Caco-2 (cell line): ENCODE measurements at regions of chr7 and their contacts with region 1.

Region 1: GRCh38 chr7:26864309-26865093 is at the start of gene SKAP2:
- DNase-seq: peak; percentile 99
- H3K4me3 ChIP-seq: peak within 1 kb of the TSS; percentile 88
- H3K4me3 Mint-ChIP-seq: peak within 1 kb of the TSS; percentile 87
- H3K27ac Mint-ChIP-seq: peak within 1 kb of the TSS; percentile 81
- H3K4me1 ChIP-seq: peaks cover 7% of the 10 kb centered on the region
- H3K4me1 Mint-ChIP-seq: peaks cover 7% of the 10 kb centered on the region
- H3K27me3 ChIP-seq: no peaks in the 10 kb centered on the region
- H3K27me3 Mint-ChIP-seq: no peaks in the 10 kb centered on the region
- CTCF ChIP-seq: no peak
- total RNA-seq, gene SKAP2: 36.2 and 38.2 TPM in 2 replicates

Region 2: DNA sequence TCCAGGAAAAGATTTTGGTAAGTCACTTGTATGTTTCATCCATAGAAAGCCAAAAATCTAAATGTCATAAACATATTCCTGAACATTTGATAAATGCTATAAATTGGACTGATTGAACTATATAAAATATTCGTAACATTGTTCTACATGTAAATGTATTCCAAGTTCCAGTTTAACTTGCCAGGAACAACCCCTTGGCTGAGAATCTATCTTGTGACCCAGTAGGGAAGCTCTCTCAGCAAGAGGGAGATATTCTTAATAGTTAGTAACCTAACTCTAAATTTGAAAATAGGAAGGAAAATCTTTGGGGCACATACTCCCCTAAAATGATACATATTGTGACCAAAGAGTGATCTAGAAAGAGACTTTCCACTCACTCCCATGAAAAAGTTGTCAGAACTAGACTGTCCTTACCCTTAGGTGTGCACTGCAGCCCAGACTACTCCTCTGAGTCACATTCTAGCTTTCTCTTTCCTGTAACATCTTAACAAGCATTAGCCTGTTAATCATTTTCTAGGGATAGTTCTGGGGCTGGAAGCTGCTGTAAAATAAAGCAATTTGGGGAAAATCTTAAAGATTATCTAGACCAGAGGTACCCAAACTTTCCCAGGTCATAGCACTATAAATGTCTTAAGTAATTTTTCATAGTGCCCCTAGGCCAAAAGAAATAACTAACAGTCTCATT is 73.6 kb after region 1 on chr7:
- CTCF ChIA-PET with region 1: no interaction called
- POLR2A ChIA-PET with region 1: no interaction called
- intact Hi-C with region 1: no loop called
- DNase-seq: peak in 1 of 2 experiments; percentile 19
- H3K4me3 ChIP-seq: no peak overlapping the region
- H3K4me3 Mint-ChIP-seq: no peak overlapping the region
- H3K27ac Mint-ChIP-seq: no peak overlapping the region
- H3K4me1 ChIP-seq: peaks cover 5% of the 10 kb centered on the region; the same call in 1 of the 2 replicates
- H3K4me1 Mint-ChIP-seq: peaks cover 8% of the 10 kb centered on the region
- H3K27me3 ChIP-seq: no peaks in the 10 kb centered on the region
- H3K27me3 Mint-ChIP-seq: peaks cover 4% of the 10 kb centered on the region
- CTCF ChIP-seq: no peak

Region 3: GRCh38 chr7:26948617-26949118 is 84.2 kb after region 1 on chr7:
- CTCF ChIA-PET with region 1: no interaction called
- POLR2A ChIA-PET with region 1: no interaction called
- intact Hi-C with region 1: loop called (anchors 5 kb)
- DNase-seq: peak in 1 of 2 experiments; percentile 6
- H3K4me3 ChIP-seq: no peak overlapping the region
- H3K4me3 Mint-ChIP-seq: no peak overlapping the region
- H3K27ac Mint-ChIP-seq: no peak overlapping the region
- H3K4me1 ChIP-seq: peaks cover 23% of the 10 kb centered on the region
- H3K4me1 Mint-ChIP-seq: peaks cover 18% of the 10 kb centered on the region
- H3K27me3 ChIP-seq: no peaks in the 10 kb centered on the region
- H3K27me3 Mint-ChIP-seq: no peaks in the 10 kb centered on the region
- CTCF ChIP-seq: no peak

Region 4: GRCh38 chr7:27031289-27032172 is 167.0 kb after region 1 on chr7:
- CTCF ChIA-PET with region 1: no interaction called
- POLR2A ChIA-PET with region 1: no interaction called
- intact Hi-C with region 1: loop called (anchors 5 kb)
- DNase-seq: no peak
- H3K4me3 ChIP-seq: no peak overlapping the region
- H3K4me3 Mint-ChIP-seq: no peak overlapping the region
- H3K27ac Mint-ChIP-seq: peak overlapping the region; percentile 58
- H3K4me1 ChIP-seq: peaks cover 14% of the 10 kb centered on the region
- H3K4me1 Mint-ChIP-seq: peaks cover 12% of the 10 kb centered on the region
- H3K27me3 ChIP-seq: no peaks in the 10 kb centered on the region
- H3K27me3 Mint-ChIP-seq: no peaks in the 10 kb centered on the region
- CTCF ChIP-seq: no peak

Region 5: DNA sequence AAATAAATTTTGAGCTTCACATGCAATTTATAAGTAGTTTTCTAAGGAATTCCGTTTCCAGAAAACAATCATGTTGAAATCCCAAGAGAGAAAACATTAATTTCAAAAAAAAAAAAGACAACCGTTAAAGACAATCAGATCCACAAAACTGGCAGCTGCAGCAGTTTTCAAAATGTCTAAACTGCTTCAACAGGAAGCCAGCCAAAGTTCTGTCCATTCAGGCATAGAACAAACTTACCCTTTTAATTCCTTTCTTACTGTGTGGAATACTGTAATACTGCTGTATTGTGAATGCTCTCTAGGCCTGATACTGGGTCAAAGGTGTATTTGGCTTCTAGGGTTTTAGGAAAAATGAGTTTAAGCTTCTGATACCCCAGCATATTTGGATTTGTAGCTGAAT is 199.7 kb after region 1 on chr7:
- CTCF ChIA-PET with region 1: no interaction called
- POLR2A ChIA-PET with region 1: no interaction called
- intact Hi-C with region 1: no loop called
- DNase-seq: no peak
- H3K4me3 ChIP-seq: no peak overlapping the region
- H3K4me3 Mint-ChIP-seq: no peak overlapping the region
- H3K27ac Mint-ChIP-seq: no peak overlapping the region
- H3K4me1 ChIP-seq: peaks cover 3% of the 10 kb centered on the region; the same call in 1 of the 2 replicates
- H3K4me1 Mint-ChIP-seq: peaks cover 5% of the 10 kb centered on the region
- H3K27me3 ChIP-seq: no peaks in the 10 kb centered on the region
- H3K27me3 Mint-ChIP-seq: peaks cover 2% of the 10 kb centered on the region
- CTCF ChIP-seq: no peak

Region 6: GRCh38 chr7:27095897-27096767 is 231.6 kb after region 1 on chr7 and contains the start of gene HOXA1:
- CTCF ChIA-PET with region 1: interaction called, 3 read pairs
- POLR2A ChIA-PET with region 1: no interaction called
- intact Hi-C with region 1: loop called (anchors 1 kb)
- DNase-seq: peak; percentile 93 to 95
- H3K4me3 ChIP-seq: peak within 1 kb of the TSS; percentile 86
- H3K4me3 Mint-ChIP-seq: peak within 1 kb of the TSS; percentile 87
- H3K27ac Mint-ChIP-seq: peak within 1 kb of the TSS; percentile 74
- H3K4me1 ChIP-seq: peaks cover 10% of the 10 kb centered on the region
- H3K4me1 Mint-ChIP-seq: peaks cover 50% of the 10 kb centered on the region
- H3K27me3 ChIP-seq: no peaks in the 10 kb centered on the region
- H3K27me3 Mint-ChIP-seq: no peaks in the 10 kb centered on the region
- CTCF ChIP-seq: peak in 1 of 2 experiments; percentile 17
- total RNA-seq, gene HOXA1: 18.5 and 18.8 TPM in 2 replicates

Region 7: GRCh38 chr7:27160546-27161213 is 296.2 kb after region 1 on chr7:
- CTCF ChIA-PET with region 1: interaction called, 3 read pairs
- POLR2A ChIA-PET with region 1: interaction called, 10 read pairs
- intact Hi-C with region 1: loop called (anchors 5 kb)
- DNase-seq: peak; percentile 84 to 93
- H3K4me3 ChIP-seq: peak overlapping the region; percentile 73
- H3K4me3 Mint-ChIP-seq: peak overlapping the region; percentile 77
- H3K27ac Mint-ChIP-seq: no peak overlapping the region
- H3K4me1 ChIP-seq: peaks cover 7% of the 10 kb centered on the region
- H3K4me1 Mint-ChIP-seq: peaks cover 14% of the 10 kb centered on the region
- H3K27me3 ChIP-seq: no peaks in the 10 kb centered on the region
- H3K27me3 Mint-ChIP-seq: no peaks in the 10 kb centered on the region
- CTCF ChIP-seq: peak; percentile 94 to 98